ENCODE measurements at regions of chr17 and their contacts with region 1.

Region 1: GRCh38 chr17:72725433-72726068 is 366.9 kb downstream of the SLC39A11 start:
- H3K4me3 ChIP-seq: no peak overlapping the region
- H3K27ac ChIP-seq: no peak overlapping the region
- H3K4me1 ChIP-seq: no peaks in the 10 kb centered on the region
- CTCF ChIP-seq: peak; percentile 81

Region 2: GRCh38 chr17:72592242-72592966 is 133.1 kb before region 1 on chr17:
- CTCF ChIA-PET with region 1: interaction called, 29 read pairs
- POLR2A ChIA-PET with region 1: interaction called, 4 read pairs
- H3K4me3 ChIP-seq: peak overlapping the region; percentile 85
- H3K27ac ChIP-seq: peak overlapping the region; percentile 75
- H3K4me1 ChIP-seq: peaks cover 8% of the 10 kb centered on the region; the same call in 1 of the 2 replicates
- CTCF ChIP-seq: peak; percentile 65

Region 3: DNA sequence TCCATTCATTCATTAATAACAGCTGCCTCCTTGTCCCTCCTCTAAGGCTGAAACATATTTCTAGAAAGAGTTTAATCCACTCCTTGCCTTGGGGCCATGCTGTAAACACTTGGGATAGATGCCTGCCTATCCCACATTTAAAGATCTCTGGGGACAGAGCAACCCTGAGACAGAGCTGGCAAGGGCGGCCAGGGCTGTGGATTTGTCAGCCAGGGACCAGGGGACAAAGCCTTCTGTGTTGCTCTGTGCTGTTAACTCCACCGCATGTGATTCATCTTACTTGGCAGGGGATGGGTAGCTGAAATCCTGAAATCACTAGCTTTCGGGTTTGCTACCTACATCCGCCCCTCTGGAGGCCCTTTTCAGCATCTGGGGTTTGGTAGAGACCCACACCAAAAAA is 26.0 kb before region 1 on chr17:
- CTCF ChIA-PET with region 1: interaction called, 18 read pairs
- POLR2A ChIA-PET with region 1: no interaction called
- H3K4me3 ChIP-seq: no peak overlapping the region
- H3K27ac ChIP-seq: no peak overlapping the region
- H3K4me1 ChIP-seq: peaks cover 3% of the 10 kb centered on the region; the same call in 1 of the 2 replicates
- CTCF ChIP-seq: no peak

Region 4: DNA sequence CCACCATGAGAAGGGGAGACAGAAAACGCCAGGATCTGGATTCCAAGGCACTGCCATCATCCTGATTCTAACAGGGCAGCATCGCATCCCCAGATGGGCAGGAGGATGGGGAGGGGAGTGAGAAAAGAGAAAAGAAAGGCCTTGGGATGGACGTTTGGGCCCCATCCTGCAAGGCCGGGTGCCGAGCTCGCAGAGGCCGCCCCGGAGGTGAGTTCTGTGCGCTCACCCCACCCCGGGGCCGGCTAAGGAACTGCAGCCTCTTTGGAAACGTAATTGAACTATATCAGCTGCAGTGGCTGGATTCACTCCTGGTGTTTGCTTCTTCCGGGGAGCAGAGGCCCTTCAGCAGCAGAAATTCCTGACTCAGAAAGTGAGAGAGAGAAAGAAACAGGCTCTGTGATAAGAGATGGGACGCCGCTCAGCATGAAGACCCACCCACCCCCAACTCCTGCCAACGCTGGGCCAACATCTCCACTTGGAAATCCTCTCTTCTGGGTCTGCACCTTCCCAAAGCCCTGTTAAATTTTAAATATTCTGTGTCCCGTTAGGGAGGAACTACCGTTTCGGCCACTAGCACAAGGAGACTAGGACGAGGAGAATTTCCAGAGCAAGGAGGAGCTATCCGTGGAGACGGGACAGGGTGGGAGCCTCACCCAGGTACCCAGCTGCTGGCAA is 430.8 kb after region 1 on chr17:
- CTCF ChIA-PET with region 1: interaction called, 34 read pairs
- POLR2A ChIA-PET with region 1: no interaction called
- H3K4me3 ChIP-seq: no peak overlapping the region
- H3K27ac ChIP-seq: peak overlapping the region; percentile 10; the same call in 1 of the 2 replicates
- H3K4me1 ChIP-seq: no peaks in the 10 kb centered on the region; the same call in 1 of the 2 replicates
- CTCF ChIP-seq: peak; percentile 78

Region 5: DNA sequence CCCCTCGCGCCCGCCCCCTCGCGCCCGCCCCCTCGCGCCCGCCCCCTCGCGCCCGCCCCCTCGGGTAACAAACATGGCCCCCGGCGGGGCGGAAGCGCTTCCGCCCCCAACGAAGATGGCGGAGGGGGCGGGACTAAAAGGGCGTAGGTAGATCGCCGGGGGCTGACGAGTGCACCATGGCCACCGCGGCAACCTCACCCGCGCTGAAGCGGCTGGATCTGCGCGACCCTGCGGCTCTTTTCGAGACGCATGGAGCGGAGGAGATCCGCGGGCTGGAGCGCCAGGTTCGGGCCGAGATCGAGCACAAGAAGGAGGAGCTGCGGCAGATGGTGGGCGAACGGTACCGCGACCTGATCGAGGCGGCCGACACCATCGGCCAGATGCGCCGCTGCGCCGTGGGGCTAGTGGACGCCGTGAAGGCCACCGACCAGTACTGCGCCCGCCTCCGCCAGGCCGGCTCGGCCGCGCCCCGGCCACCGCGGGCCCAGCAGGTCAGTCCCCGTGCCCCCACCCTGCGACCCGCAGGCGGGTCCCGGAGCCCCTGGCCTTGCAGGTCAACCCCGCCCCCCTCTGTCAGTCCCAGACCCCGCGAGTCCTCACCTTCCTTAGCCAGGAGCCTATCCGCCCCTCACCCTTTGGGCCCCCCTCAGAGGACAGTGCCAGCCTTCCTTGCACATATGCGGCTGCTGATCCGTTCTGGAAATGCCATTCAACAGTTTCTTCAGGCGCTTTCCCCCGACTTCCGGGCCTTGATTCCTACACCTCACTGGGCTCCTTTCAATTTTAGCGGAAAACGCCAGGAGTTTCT is 467.5 kb after region 1 on chr17 and contains the start of gene COG1:
- CTCF ChIA-PET with region 1: interaction called, 206 read pairs
- POLR2A ChIA-PET with region 1: interaction called, 8 read pairs
- H3K4me3 ChIP-seq: peak within 1 kb of the TSS; percentile 93
- H3K27ac ChIP-seq: peak within 1 kb of the TSS; percentile 98
- H3K4me1 ChIP-seq: peaks cover 3% of the 10 kb centered on the region; the same call in 1 of the 2 replicates
- CTCF ChIP-seq: peak; percentile 73; the same call in 1 of the 2 replicates

Region 6: DNA sequence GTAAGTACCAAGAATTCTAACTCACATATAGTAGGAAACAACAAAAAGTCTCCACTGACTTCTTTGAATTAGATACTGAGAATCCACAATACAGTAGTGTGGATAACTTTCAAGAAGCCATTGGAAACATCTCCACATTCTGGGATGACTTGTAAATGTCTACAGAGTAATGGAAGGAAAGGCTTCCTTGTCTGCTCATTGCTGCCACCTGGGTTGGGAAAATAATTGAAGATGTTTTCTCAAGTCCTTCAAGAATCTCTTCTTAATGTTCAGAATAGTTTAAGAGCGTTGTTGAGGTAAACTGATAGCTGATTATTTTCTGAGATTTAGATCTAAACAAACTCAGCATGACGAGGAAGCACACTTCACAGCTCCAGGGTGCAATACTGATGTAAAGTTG is 522.2 kb after region 1 on chr17:
- CTCF ChIA-PET with region 1: interaction called, 21 read pairs
- POLR2A ChIA-PET with region 1: no interaction called
- H3K4me3 ChIP-seq: no peak overlapping the region
- H3K27ac ChIP-seq: no peak overlapping the region
- H3K4me1 ChIP-seq: no peaks in the 10 kb centered on the region
- CTCF ChIP-seq: no peak

Region 7: GRCh38 chr17:73371285-73371684 is 645.7 kb after region 1 on chr17:
- CTCF ChIA-PET with region 1: interaction called, 67 read pairs
- POLR2A ChIA-PET with region 1: interaction called, 4 read pairs
- H3K4me3 ChIP-seq: no peak overlapping the region
- H3K27ac ChIP-seq: no peak overlapping the region
- H3K4me1 ChIP-seq: no peaks in the 10 kb centered on the region
- CTCF ChIP-seq: no peak

Measured in HEK293 (cell line).